ENCODE measurements at regions of chr1 and their contacts with region 1.

Region 1: DNA sequence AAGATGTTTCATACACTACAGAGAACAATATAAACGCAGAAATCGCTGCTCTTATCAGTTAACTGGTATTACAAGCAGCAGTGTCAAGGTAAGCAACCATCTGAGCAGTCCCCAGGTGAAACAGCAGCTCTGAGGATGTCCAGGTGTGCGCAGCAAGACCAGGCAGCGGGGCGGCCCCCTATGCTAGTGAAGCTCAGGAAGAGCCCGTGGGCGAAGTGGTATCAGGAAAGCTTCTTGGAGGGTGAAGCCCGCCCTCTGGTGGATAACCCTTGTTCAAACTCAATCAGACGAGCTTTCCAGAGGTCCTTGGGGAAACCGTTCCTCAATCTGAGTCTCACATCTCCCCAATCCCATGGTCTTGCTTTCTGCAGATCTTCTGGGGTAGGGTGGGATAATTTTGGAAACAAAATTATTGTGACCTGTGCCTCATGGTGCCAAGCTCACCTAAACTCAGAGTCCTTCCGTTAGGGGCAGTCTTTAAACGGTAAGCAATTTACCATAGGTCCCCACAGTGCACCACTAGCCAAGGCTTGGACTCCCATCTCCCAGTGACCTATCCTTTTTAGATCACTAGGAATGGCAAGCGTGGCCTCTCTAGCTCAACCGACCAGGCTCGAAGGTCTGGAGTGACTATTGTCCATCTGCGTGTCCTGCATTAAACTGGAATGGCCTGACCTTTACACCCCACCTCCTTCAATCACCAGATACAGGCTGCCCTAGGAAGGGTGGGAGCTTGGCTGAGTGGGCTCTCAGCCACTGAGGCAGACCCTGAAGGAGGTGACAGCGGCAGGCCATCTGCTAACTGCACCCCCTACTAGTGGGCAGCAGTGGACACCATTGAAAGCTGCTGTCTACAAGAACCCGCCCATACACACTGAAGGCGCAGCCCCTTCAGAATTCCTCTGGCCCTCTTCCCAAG is 13.6 kb upstream of the FAM110D start:
- DNase-seq: peak; percentile 86
- ATAC-seq: peak; percentile 97
- H3K4me3 Mint-ChIP-seq: no peak overlapping the region
- H3K27ac Mint-ChIP-seq: no peak overlapping the region
- H3K4me1 Mint-ChIP-seq: no peaks in the 10 kb centered on the region
- H3K27me3 Mint-ChIP-seq: peaks cover 58% of the 10 kb centered on the region
- CTCF ChIP-seq: peak; percentile 58

Region 2: GRCh38 chr1:25848531-25848930 is 296.8 kb before region 1 on chr1:
- CTCF ChIA-PET with region 1: no interaction called
- POLR2A ChIA-PET with region 1: no interaction called
- DNase-seq: no peak
- ATAC-seq: no peak
- H3K4me3 Mint-ChIP-seq: no peak overlapping the region
- H3K27ac Mint-ChIP-seq: peak overlapping the region; percentile 42; the same call in 1 of the 2 replicates
- H3K4me1 Mint-ChIP-seq: peaks cover 4% of the 10 kb centered on the region; the same call in 1 of the 2 replicates
- H3K27me3 Mint-ChIP-seq: no peaks in the 10 kb centered on the region
- CTCF ChIP-seq: no peak

Region 3: DNA sequence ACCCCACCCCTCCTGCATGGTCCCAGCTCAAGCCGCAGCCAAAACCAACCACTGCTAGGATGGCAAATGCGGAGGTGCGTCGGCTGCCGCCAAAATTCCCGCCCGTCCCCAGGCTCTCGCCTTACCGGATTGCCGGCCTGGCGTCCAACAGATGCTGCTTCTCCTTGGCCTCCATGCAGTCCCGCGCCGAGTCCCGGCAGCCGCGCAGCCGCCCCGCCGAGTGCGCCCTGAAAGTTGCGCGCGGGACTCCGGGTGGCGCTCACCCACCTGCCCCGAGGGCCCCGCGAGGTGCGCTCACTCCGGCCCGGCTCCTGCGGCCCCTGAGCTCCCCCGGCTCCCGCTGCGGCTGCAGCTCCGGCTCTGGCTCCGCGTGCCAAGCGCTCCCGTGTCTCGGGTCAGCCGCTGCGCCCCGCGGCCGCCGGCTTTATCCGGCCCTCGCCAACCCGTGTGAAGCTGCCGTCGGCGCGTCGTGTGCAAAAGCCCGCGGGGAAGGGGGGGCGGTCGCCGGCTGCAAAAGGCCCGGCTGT is 99.5 kb before region 1 on chr1 and contains the start of gene SLC30A2:
- CTCF ChIA-PET with region 1: interaction called, 15 read pairs
- POLR2A ChIA-PET with region 1: no interaction called
- DNase-seq: peak; percentile 47
- ATAC-seq: peak; percentile 51
- H3K4me3 Mint-ChIP-seq: peak within 1 kb of the TSS; percentile 59
- H3K27ac Mint-ChIP-seq: no peak within 1 kb of the TSS
- H3K4me1 Mint-ChIP-seq: peaks cover 3% of the 10 kb centered on the region
- H3K27me3 Mint-ChIP-seq: peaks cover 93% of the 10 kb centered on the region
- CTCF ChIP-seq: no peak
- total RNA-seq, gene SLC30A2: 0.15 to 0.41 TPM (median 0.41 TPM) in 3 replicates

Region 4: DNA sequence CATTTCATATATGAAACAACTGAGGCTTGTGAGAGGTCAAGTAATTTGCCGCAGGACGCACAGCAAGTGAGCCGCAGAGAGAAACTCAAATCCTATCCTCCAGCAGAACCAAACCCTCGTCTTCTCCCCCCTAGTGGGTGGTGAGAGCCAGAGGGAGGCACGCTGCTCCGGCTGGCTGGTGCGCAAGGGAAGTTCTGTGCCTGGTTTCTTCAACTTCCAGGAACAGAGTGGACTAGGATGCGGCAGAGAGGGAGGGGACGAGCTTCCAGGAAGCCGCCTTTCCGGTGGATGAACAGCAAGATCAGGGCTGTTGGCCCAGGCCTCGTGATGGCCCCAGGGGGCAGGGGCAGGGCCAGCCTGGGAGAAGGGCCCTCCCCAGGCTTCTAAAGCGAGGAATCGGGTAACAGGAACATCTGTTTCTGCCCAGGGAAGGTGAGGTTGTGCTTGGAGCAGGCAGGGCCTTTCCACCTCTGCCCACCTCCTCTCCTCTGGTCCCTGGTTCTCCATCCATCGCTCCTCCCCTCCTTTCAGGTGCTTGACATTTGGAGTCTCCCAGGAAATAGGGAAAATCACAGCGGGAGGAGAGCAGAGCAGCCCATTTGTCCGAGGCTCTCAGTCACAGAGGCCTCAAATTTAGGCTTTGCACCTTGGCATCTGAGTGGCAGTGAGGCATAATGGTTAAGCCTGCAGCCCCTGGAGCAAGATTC is 50.5 kb before region 1 on chr1:
- CTCF ChIA-PET with region 1: interaction called, 49 read pairs
- POLR2A ChIA-PET with region 1: no interaction called
- DNase-seq: peak; percentile 72
- ATAC-seq: peak; percentile 92
- H3K4me3 Mint-ChIP-seq: peak overlapping the region; percentile 25
- H3K27ac Mint-ChIP-seq: no peak overlapping the region
- H3K4me1 Mint-ChIP-seq: peaks cover 36% of the 10 kb centered on the region
- H3K27me3 Mint-ChIP-seq: peaks cover 5% of the 10 kb centered on the region
- CTCF ChIP-seq: no peak

Region 5: GRCh38 chr1:26126321-26127084 is 18.8 kb before region 1 on chr1:
- CTCF ChIA-PET with region 1: interaction called, 31 read pairs
- POLR2A ChIA-PET with region 1: no interaction called
- DNase-seq: no peak
- ATAC-seq: no peak
- H3K4me3 Mint-ChIP-seq: no peak overlapping the region
- H3K27ac Mint-ChIP-seq: peak overlapping the region; percentile 26; the same call in 1 of the 2 replicates
- H3K4me1 Mint-ChIP-seq: peaks cover 12% of the 10 kb centered on the region
- H3K27me3 Mint-ChIP-seq: no peaks in the 10 kb centered on the region
- CTCF ChIP-seq: no peak

Region 6: GRCh38 chr1:26177182-26177684 is 31.9 kb after region 1 on chr1 and contains the start of gene CNKSR1:
- CTCF ChIA-PET with region 1: interaction called, 16 read pairs
- POLR2A ChIA-PET with region 1: no interaction called
- DNase-seq: peak; percentile 94
- ATAC-seq: peak; percentile 100
- H3K4me3 Mint-ChIP-seq: peak within 1 kb of the TSS; percentile 82
- H3K27ac Mint-ChIP-seq: peak within 1 kb of the TSS; percentile 97
- H3K4me1 Mint-ChIP-seq: peaks cover 10% of the 10 kb centered on the region
- H3K27me3 Mint-ChIP-seq: no peaks in the 10 kb centered on the region
- CTCF ChIP-seq: no peak
- total RNA-seq, gene CNKSR1: 18.0 to 20.5 TPM (median 19.7 TPM) in 3 replicates